ENCODE measurements at regions of chr3 and their contacts with region 1.

Region 1: DNA sequence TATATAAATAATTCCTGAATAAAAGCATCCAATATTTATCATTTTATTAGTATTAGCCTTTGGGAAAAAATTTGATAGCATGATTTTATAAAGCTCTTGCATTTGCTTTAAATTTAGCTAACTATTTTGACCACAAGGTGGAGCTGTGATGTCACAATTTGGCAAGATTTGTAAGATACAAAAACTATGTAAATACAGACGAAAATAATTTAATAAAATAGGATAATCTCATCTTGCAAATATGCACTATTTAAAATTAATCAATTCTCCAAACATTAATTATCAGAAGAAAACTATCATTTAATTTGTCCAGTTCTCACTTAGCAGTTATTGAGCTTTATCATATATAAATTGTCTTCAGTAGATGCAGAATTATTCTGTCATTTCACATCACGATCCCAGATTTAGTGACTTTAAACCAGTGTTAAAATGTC is 95.4 kb downstream of the PLOD2 start:
- DNase-seq: no peak
- ATAC-seq: no peak
- H3K4me3 ChIP-seq: no peak overlapping the region
- H3K27ac ChIP-seq: no peak overlapping the region
- H3K4me1 ChIP-seq: peaks cover 0 to 3% (median 0%) of the 10 kb centered on the region in 12 donors
- H3K27me3 ChIP-seq: no peaks in the 10 kb centered on the region
- CTCF ChIP-seq: peak; percentile 66 to 89 (median 80)
- POLR2A ChIP-seq: no peak

Region 2: GRCh38 chr3:146160964-146161662 is 95.5 kb after region 1 on chr3 and contains the start of gene PLOD2:
- intact Hi-C with region 1: loop called in 5 of 10 experiments (anchors 5 kb)
- DNase-seq: peak; percentile 73 to 91 (median 89)
- ATAC-seq: peak; percentile 45 to 91 (median 80)
- H3K4me3 ChIP-seq: peak within 1 kb of the TSS; percentile 72 to 94 (median 79)
- H3K27ac ChIP-seq: peak within 1 kb of the TSS; percentile 75 to 97 (median 92)
- H3K4me1 ChIP-seq: peaks cover 6 to 64% (median 42%) of the 10 kb centered on the region in 12 donors
- H3K27me3 ChIP-seq: peaks cover 0 to 12% (median 0%) of the 10 kb centered on the region in 9 donors
- CTCF ChIP-seq: no peak
- POLR2A ChIP-seq: peak in 1 of 2 donors; percentile 84
- total RNA-seq, gene PLOD2: 6.8 to 33.0 (median 17.9) TPM

Region 3: DNA sequence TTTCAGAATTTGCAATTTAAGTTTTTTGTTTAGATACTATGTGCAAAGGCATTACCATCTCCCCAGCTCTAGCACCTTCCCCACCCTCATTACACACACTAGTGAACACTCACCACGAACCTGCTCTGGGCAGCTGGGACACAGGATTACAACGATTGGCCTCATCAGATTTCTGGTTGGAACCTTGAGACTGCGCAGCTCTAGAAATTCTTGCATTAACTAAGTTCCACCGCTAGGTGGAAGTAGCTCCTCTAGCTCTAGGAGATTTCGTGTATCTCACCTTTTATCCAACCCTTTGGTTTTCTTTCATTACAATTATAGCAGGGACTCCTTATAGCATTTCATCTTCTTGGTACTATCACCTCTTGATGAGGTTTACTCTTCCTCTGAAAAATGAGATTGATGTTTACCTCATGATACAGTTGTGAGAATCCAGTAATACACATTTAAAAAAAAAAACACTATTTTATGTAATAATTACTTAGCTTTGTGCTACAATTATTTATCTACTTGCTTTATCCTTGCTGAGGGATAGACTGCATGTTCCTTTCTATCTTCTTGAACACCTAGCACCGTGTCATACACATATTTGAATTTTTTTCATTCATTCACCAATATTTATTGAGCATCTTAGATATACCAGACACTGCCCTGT is 124.1 kb after region 1 on chr3:
- intact Hi-C with region 1: loop called (anchors 1 to 5 kb)
- DNase-seq: peak in 1 of 5 donors; percentile 16
- ATAC-seq: peak; percentile 61 to 75 (median 72)
- H3K4me3 ChIP-seq: no peak overlapping the region
- H3K27ac ChIP-seq: no peak overlapping the region
- H3K4me1 ChIP-seq: peaks cover 0 to 5% (median 0%) of the 10 kb centered on the region in 12 donors
- H3K27me3 ChIP-seq: no peaks in the 10 kb centered on the region
- CTCF ChIP-seq: peak; percentile 69 to 86 (median 80)
- POLR2A ChIP-seq: no peak

Region 4: DNA sequence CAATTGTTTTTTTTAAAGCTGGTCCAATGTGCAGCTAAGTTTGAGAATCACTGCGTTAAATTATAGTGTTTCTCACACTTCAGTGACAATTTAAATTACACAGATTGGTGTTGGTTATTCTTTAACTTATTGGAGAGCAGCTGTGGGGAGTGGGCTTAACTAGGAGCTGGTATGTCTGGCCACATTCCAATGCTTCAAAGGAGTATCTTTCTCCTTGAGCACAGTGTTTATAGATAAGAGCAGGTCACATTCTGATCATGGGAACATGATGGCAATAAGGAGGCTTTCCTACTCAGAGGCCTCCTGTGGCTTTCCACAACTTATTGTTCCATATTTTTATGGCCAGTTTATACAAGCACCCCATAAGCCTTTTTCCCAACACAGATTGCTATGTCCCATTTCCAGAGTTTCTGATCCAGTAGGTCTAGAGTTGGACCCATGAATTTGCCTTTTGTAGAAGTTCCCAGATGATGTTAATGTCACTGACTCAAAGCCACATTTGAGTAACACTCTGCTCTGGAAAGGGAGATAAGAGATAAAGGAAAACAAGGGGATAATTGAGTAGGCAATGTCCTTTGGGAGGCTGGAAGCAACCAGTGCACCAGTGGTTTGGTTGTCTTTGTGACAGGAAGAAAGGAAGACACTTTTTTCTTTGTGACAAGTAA is 218.3 kb after region 1 on chr3:
- intact Hi-C with region 1: no loop called
- DNase-seq: no peak
- ATAC-seq: no peak
- H3K4me3 ChIP-seq: no peak overlapping the region
- H3K27ac ChIP-seq: no peak overlapping the region
- H3K4me1 ChIP-seq: peaks cover 0 to 18% (median 0%) of the 10 kb centered on the region in 12 donors
- H3K27me3 ChIP-seq: no peaks in the 10 kb centered on the region
- CTCF ChIP-seq: no peak
- POLR2A ChIP-seq: no peak

Region 5: DNA sequence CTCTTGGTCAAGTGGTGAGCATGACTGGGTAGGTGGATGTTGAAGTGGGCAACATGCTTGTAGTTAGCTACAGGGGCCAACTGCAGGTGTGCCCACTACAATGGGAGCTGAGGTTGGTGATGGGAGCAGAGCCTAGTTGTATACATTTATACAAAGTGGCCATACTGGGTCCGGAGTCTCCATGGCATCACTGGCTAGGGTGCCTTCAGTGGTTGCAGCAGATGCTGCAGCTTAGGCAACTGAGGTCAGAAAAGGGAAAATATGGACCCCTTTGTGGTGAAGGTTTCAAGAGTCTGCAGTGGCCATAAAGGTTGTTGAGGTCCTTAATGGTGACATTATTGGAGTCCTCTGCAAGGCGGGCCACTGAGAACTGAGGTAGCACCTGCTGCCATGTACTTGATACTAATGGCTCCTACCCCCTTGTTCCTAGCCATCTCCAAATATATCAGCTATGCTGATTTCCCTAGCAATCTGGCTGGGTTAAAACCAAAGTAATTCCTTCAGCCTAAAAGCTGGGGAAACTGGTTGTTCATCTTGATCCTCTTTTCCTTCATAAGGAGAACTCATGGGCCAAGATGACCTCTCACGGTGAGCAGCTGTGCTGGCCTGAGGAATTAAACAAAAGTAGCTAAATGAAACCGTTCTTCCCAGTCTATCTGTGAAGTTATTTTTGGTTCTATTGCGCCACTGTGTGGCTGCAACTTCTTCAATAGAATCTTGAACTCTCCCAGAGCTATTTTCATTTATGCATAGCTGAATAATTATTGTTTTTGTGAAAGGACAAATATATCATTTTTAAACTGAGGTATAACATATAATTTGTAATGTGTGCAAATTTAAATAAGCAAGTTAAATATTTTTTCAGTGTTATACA is 261.3 kb after region 1 on chr3:
- intact Hi-C with region 1: loop called in 9 of 10 experiments (anchors 2 to 5 kb)
- DNase-seq: peak in 3 of 5 donors; percentile 24 to 34 (median 31)
- ATAC-seq: peak; percentile 26 to 85 (median 80)
- H3K4me3 ChIP-seq: no peak overlapping the region
- H3K27ac ChIP-seq: no peak overlapping the region
- H3K4me1 ChIP-seq: peaks cover 0 to 5% (median 0%) of the 10 kb centered on the region in 12 donors
- H3K27me3 ChIP-seq: no peaks in the 10 kb centered on the region
- CTCF ChIP-seq: peak; percentile 25 to 75 (median 61)
- POLR2A ChIP-seq: no peak

Region 6: GRCh38 chr3:146334151-146334550 is 268.6 kb after region 1 on chr3:
- intact Hi-C with region 1: loop called in 6 of 10 experiments (anchors 5 kb)
- DNase-seq: peak in 2 of 5 donors; percentile 17 to 26
- ATAC-seq: peak in 1 of 4 donors; percentile 52
- H3K4me3 ChIP-seq: no peak overlapping the region
- H3K27ac ChIP-seq: no peak overlapping the region
- H3K4me1 ChIP-seq: no peaks in the 10 kb centered on the region
- H3K27me3 ChIP-seq: no peaks in the 10 kb centered on the region
- CTCF ChIP-seq: peak in 10 of 12 donors; percentile 15 to 51 (median 39)
- POLR2A ChIP-seq: no peak

Region 7: DNA sequence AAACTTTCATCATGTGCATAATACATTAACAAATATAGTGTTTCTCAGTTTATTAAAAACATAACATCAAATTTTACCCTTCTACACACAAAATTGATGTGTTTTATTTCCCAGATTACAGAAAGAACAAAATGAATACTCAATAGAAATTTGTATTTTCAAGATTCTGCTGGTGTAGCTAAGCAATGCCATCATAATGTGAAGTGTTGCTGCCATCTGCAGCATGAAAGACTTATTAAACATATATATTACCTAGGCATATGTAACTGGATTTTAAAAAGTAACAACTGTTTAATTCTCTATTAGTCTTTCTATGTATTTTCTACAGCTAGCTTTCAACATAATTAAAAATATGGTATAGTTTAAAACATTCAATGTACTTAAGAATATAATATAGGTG is 512.1 kb after region 1 on chr3:
- intact Hi-C with region 1: loop called in 4 of 10 experiments (anchors 5 to 10 kb)
- DNase-seq: no peak
- ATAC-seq: peak in 1 of 4 donors; percentile 55
- H3K4me3 ChIP-seq: no peak overlapping the region
- H3K27ac ChIP-seq: no peak overlapping the region
- H3K4me1 ChIP-seq: no peaks in the 10 kb centered on the region
- H3K27me3 ChIP-seq: no peaks in the 10 kb centered on the region
- CTCF ChIP-seq: peak in 11 of 12 donors; percentile 23 to 61 (median 56)
- POLR2A ChIP-seq: no peak